Cardiac septum (tissue), 1 donor: ENCODE measurements at regions of chr18 and their contacts with region 1.

Region 1: GRCh38 chr18:7566567-7567473 is at the start of gene PTPRM:
- DNase-seq: peak; percentile 94
- total RNA-seq, gene PTPRM: 132 TPM

Region 2: GRCh38 chr18:7370802-7371201 is 196.0 kb before region 1 on chr18:
- intact Hi-C with region 1: loop called (anchors 2 kb)
- DNase-seq: peak; percentile 89

Region 3: DNA sequence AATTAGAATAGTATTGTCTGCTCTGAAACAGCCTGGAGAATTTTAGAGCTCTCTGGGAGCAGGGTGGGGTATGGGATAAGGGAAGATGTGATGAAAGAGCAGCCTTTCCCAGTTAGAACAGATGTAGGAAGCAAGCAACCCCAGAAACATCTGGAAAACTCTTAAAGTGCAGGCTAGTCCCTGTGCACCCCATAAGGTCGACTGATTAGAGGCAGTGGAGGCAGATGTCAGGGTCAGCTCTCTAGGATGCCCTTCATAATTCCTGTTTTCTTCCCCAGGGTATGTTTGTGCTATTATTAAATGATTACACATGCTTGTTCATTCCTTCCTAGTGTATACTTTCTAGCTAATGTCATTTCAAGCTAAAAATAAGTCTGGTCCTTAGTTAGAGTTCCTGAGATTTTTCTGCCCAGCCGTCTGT is 42.0 kb after region 1 on chr18:
- intact Hi-C with region 1: loop called (anchors 5 kb)
- DNase-seq: no peak

Region 4: GRCh38 chr18:7755753-7756475 is 189.1 kb after region 1 on chr18:
- intact Hi-C with region 1: loop called (anchors 5 kb)
- DNase-seq: no peak